Right cardiac atrium (tissue), 5 donors: ENCODE measurements at regions of chr1 and their contacts with region 1.

Region 1: DNA sequence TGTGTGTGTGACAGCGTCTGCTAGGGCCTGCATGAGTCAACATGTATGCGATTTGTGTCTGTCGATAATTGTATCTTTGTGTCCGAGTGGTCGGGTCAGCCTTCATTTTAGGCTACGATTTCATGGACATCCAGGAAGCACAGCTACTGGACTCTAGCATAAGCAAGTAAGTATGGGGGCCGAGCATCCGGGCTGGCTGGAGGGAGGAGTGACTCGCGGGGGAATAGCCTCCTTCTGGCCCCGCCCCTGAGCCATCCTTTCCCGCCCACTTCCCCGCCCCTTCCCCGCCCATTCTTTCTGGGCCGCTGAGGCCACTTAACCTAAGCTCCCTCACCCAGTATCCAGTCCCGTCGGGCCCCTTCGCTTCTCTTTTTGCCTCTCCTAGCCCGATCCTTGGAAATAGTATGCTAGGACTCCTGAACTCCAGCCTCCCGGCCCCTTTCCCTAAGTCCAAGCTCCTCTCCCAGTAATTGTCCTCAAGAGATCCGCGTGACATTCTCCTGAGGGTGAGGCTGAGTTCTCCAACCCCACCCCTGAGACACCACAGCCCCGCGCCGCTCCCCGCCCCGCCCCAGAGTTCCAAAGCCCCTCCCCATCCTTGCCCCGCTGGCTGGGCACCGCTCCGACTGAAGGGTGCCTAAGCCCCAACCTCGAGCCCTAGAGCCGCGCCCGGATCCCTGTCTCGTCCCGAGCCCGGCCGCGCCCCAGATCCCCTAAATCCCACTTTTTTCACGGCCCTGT is 1.2 kb downstream of the MAP3K6 start:
- DNase-seq: peak; percentile 92 to 96 (median 95)
- ATAC-seq: peak; percentile 81 to 86
- H3K4me3 ChIP-seq: peak overlapping the region; percentile 94
- H3K27ac ChIP-seq: peak overlapping the region; percentile 100
- H3K4me1 ChIP-seq: peaks cover 18% of the 10 kb centered on the region
- H3K27me3 ChIP-seq: no peaks in the 10 kb centered on the region

Region 2: GRCh38 chr1:27402349-27402754 is 36.8 kb after region 1 on chr1:
- intact Hi-C with region 1: loop called in 1 of 4 experiments (anchors 5 kb)
- DNase-seq: peak; percentile 76 to 92 (median 91)
- ATAC-seq: peak; percentile 31 to 53
- H3K4me3 ChIP-seq: no peak overlapping the region
- H3K27ac ChIP-seq: peak overlapping the region; percentile 84
- H3K4me1 ChIP-seq: peaks cover 34% of the 10 kb centered on the region
- H3K27me3 ChIP-seq: no peaks in the 10 kb centered on the region